MCF 10A (cell line): ENCODE measurements at regions of chr2 and their contacts with region 1.

Region 1: GRCh38 chr2:37231241-37232130 is at the starts of genes CEBPZ and NDUFAF7:
- DNase-seq: peak; percentile 94
- H3K4me3 Mint-ChIP-seq: no peak within 1 kb of the TSS
- H3K27ac Mint-ChIP-seq: no peak within 1 kb of the TSS
- H3K4me1 Mint-ChIP-seq: peaks cover 6% of the 10 kb centered on the region
- H3K27me3 Mint-ChIP-seq: no peaks in the 10 kb centered on the region
- CTCF ChIP-seq: no peak
- total RNA-seq, gene CEBPZ: 46.6 and 61.7 TPM in 2 replicates
- total RNA-seq, gene NDUFAF7: 16.1 and 18.3 TPM in 2 replicates

Region 2: DNA sequence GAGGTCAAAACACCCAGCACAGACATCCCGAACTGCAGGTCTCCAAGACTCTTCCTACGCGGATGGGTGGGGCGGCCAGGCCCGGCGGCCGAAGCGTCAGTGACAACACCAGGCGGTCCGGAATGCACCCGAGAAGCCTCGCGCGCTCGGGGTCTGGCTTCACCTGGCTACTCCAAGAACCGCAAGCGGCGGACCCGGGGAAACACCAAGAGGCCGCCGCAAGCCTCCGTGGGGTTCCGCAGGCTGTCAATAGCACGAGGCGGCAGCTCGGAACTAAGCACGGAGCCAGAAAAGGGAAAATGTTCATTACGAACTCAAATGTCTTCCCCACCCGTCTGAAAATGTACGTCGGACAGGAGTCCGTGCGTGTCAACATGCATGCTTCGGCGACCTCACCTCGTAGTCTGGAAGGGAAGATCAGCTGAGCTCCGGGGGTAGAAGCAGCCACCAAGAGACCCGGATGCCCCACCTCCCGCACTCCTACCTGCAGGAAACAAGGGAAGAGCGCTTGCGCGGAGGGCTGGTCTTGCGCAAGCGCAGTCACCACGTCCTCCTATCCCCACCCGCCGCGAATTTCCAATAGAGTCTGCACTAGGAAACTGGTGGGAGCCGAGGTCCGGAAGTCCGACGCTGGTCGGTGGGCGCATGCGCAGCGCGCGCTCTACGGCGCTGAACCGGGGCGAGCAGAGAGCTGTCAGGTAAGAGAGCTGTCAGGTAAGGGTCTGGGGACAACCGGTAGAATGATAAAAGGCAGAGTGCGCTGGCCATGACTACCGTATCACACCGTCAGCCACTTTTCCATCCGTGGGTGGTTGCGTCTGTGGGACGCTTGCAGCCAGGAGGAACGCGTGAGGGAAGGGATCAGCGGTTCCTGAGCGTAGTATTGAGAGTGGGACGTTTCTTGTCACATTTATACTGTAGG is 147.4 kb before region 1 on chr2 and contains the starts of genes GPATCH11 and HEATR5B:
- CTCF ChIA-PET with region 1: no interaction called
- POLR2A ChIA-PET with region 1: interaction called, 15 read pairs
- intact Hi-C with region 1: no loop called
- DNase-seq: peak; percentile 97
- H3K4me3 Mint-ChIP-seq: no peak within 1 kb of the TSS
- H3K27ac Mint-ChIP-seq: no peak within 1 kb of the TSS
- H3K4me1 Mint-ChIP-seq: peaks cover 30% of the 10 kb centered on the region
- H3K27me3 Mint-ChIP-seq: no peaks in the 10 kb centered on the region
- CTCF ChIP-seq: no peak
- total RNA-seq, gene GPATCH11: 5.5 and 5.9 TPM in 2 replicates
- total RNA-seq, gene HEATR5B: 14.5 and 14.8 TPM in 2 replicates

Region 3: GRCh38 chr2:37168217-37168981 is 63.1 kb before region 1 on chr2:
- CTCF ChIA-PET with region 1: interaction called, 3 read pairs
- POLR2A ChIA-PET with region 1: interaction called, 5 read pairs
- intact Hi-C with region 1: loop called (anchors 2 kb)
- DNase-seq: peak; percentile 59
- H3K4me3 Mint-ChIP-seq: no peak overlapping the region
- H3K27ac Mint-ChIP-seq: no peak overlapping the region
- H3K4me1 Mint-ChIP-seq: no peaks in the 10 kb centered on the region
- H3K27me3 Mint-ChIP-seq: no peaks in the 10 kb centered on the region
- CTCF ChIP-seq: peak; percentile 65

Region 4: GRCh38 chr2:37215250-37215649 is 16.2 kb before region 1 on chr2:
- CTCF ChIA-PET with region 1: no interaction called
- POLR2A ChIA-PET with region 1: interaction called, 14 read pairs
- intact Hi-C with region 1: no loop called
- DNase-seq: no peak
- H3K4me3 Mint-ChIP-seq: no peak overlapping the region
- H3K27ac Mint-ChIP-seq: no peak overlapping the region
- H3K4me1 Mint-ChIP-seq: peaks cover 6% of the 10 kb centered on the region
- H3K27me3 Mint-ChIP-seq: no peaks in the 10 kb centered on the region
- CTCF ChIP-seq: no peak

Region 5: DNA sequence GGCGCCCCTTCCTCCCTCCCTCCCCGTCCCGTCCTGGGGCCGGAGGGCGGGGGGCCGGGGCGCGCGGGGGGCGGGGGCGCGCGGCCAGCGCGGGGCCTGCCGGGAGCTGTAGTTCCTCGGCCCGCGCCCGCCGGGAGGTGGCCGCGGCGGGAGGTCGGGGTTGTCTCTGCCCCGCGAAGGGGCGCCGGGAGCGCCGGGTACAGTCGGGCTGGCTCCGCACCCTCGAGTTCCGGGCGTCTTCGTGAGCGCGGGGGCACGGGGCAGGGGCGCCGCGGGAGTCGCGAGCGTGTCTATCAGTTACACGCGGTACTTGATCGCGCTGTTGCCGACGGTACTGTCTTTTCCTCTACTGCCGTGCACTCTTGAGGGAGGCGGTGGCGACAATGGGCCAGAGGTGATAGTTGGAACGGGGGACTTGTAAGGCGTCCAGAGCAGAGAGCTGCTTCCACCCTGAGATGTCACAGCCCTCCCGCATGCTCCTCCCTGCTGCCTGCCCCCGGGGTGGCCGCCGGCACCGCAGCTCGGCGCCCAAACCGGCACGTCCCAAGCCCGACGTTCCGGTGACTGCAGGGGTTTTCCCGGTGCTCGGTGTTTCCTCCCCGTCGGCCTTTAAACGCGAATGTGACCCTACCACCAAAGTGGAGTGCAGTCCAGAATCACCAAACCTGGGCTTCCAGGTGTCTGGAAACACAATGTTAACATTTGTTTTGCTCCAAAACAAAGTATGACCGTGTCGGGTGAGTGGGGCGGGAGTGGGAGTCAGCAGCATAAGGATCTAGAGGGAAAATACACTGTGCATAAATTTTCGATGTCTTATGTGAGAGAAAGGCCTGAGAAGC is 93.5 kb after region 1 on chr2 and contains the start of gene PRKD3:
- CTCF ChIA-PET with region 1: no interaction called
- POLR2A ChIA-PET with region 1: interaction called, 29 read pairs
- intact Hi-C with region 1: no loop called
- DNase-seq: peak; percentile 60
- H3K4me3 Mint-ChIP-seq: peak within 1 kb of the TSS; percentile 88
- H3K27ac Mint-ChIP-seq: peak within 1 kb of the TSS; percentile 81
- H3K4me1 Mint-ChIP-seq: peaks cover 14% of the 10 kb centered on the region
- H3K27me3 Mint-ChIP-seq: no peaks in the 10 kb centered on the region
- CTCF ChIP-seq: peak; percentile 3
- total RNA-seq, gene PRKD3: 22.0 and 23.9 TPM in 2 replicates

Region 6: GRCh38 chr2:37585982-37586621 is 354.6 kb after region 1 on chr2:
- CTCF ChIA-PET with region 1: no interaction called
- POLR2A ChIA-PET with region 1: no interaction called
- intact Hi-C with region 1: no loop called
- DNase-seq: peak; percentile 91
- H3K4me3 Mint-ChIP-seq: peak overlapping the region; percentile 29
- H3K27ac Mint-ChIP-seq: peak overlapping the region; percentile 46
- H3K4me1 Mint-ChIP-seq: peaks cover 79% of the 10 kb centered on the region
- H3K27me3 Mint-ChIP-seq: no peaks in the 10 kb centered on the region
- CTCF ChIP-seq: no peak

Region 7: DNA sequence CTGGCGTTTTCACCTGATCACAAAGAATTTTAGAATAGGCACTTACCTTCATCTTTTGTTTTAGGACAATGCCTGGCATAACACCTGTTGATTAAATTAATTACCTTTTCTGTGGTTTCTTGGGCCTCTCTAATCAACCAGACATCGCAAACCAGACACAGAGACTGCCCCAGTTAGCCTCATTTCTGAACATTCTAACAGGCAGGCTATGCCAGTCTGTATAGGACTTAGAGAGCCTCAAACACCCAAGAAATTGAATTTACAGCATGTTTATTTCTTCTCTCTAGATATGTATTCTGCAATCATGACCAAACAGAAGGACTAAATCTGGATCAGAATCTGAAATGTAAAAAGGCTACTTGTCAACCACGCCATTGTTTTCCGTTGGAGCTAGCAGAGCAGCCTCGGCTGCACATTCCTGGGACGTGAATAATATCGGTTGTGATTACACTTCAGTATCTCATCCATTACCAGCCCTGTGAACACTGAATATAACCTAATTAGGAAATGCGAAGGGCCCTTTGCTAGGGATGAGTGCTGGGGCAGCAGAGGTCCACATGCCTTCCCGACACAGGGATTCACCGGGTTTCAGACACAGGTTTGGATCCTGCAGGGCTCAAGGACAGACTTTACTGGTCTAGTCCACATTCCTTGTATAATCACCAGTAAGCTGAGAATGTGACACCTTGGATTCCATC is 457.4 kb after region 1 on chr2:
- CTCF ChIA-PET with region 1: no interaction called
- POLR2A ChIA-PET with region 1: no interaction called
- intact Hi-C with region 1: no loop called
- DNase-seq: peak; percentile 64
- H3K4me3 Mint-ChIP-seq: no peak overlapping the region
- H3K27ac Mint-ChIP-seq: peak overlapping the region; percentile 86
- H3K4me1 Mint-ChIP-seq: peaks cover 24% of the 10 kb centered on the region
- H3K27me3 Mint-ChIP-seq: no peaks in the 10 kb centered on the region
- CTCF ChIP-seq: no peak